ENCODE measurements at regions of chr9 and their contacts with region 1.

Region 1: DNA sequence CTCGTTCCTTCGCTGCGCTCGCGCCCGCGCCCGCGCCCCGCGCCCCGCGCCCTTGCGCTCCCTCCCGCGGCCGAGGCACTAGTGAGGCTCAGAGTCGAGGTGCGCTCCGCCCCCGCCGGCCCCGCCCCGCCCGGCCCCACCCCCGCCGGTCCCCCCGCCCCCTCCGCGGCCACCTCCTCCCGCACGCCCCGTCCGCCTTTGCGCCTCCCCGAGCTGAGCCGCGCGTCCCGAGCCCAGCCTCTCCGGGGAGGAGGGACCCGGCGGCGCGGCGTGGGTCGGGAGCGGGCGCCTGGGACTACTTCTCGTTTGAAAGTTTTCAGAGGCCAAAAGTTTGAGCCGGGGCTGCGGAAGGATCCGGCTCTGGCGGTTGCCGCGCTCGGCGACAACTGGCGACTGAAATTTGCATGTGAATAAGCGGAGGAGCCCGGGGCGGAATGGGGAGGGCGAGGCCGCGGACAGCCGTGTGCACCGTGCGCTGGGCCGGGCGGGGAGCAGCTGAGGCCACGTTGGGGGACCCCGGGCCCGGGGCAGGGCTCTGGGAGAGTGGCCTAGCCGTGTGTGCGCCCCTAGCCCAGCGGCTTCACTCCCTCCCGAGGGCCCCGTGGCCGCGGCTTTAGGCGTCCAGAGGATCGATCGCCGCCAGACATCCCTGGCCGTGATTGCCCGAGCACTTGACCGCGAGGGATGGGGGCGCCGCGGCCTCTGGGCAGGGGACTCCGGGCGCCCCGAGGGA is at the start of gene NOTCH1:
- DNase-seq: peak; percentile 98
- total RNA-seq, gene NOTCH1: 29.7 TPM

Region 2: GRCh38 chr9:136051517-136052432 is 494.4 kb before region 1 on chr9:
- intact Hi-C with region 1: no loop called
- DNase-seq: peak; percentile 82

Region 3: GRCh38 chr9:136485049-136486045 is 60.8 kb before region 1 on chr9:
- intact Hi-C with region 1: loop called (anchors 5 kb)
- DNase-seq: peak; percentile 93

Region 4: DNA sequence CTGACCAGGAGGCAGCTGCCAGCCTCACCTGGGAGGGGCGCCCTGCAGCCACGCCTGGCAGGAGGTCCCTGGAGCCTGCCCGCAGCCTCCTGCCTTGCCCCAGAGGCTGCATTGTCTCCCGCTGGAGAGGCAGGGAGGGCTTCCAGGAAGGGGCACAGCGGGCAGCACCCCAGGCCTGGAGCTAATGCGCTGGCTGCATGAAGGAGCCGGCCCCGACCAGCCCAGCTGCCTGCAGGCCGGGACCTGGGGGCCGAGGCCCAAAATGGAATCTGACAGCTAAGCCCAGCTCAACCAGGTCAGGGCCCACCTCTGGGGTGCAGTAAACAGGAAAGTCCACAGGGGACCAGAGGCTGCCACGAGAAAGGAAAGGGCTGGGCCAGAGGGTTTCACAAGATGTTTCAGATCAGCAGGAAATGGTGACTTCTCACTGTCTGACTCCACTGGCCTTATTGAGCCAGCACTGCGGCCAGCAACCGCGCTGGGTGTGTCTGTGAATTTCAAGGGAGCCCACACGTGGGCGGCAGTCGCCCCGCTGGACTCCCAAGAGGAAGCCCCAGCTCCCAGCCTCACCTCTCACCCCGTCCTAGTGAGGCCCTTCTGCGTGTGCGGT is 18.4 kb after region 1 on chr9:
- intact Hi-C with region 1: loop called (anchors 2 kb)
- DNase-seq: peak; percentile 91

Region 5: GRCh38 chr9:136619742-136620440 is 73.8 kb after region 1 on chr9:
- intact Hi-C with region 1: loop called (anchors 5 kb)
- DNase-seq: peak; percentile 96

Measured in cardiac septum (tissue), 1 donor.